ENCODE measurements at regions of chr1 and their contacts with region 1.

Region 1: GRCh38 chr1:12528021-12528852 is 89.8 kb downstream of the DHRS3 start:
- DNase-seq: peak; percentile 98
- ATAC-seq: peak; percentile 90
- H3K4me3 ChIP-seq: peak overlapping the region in 1 of 3 experiments; percentile 45; a peak in 2 of 6 replicates
- H3K27ac ChIP-seq: peak overlapping the region; percentile 76
- H3K4me1 ChIP-seq: peaks cover 95% of the 10 kb centered on the region
- H3K27me3 ChIP-seq: no peaks in the 10 kb centered on the region
- CTCF ChIP-seq: peak; percentile 47
- EP300 ChIP-seq: peak; percentile 96 to 98
- POLR2A ChIP-seq: peak in 1 of 2 experiments; percentile 41; a peak in 2 of 4 replicates
- RAD21 ChIP-seq: peak; percentile 40; the same call in 1 of the 2 replicates

Region 2: GRCh38 chr1:12314333-12314903 is 213.8 kb before region 1 on chr1:
- CTCF ChIA-PET with region 1: no interaction called
- POLR2A ChIA-PET with region 1: no interaction called
- in situ Hi-C with region 1: no loop called
- intact Hi-C with region 1: loop called (anchors 10 kb)
- DNase-seq: peak; percentile 12
- ATAC-seq: no peak
- H3K4me3 ChIP-seq: no peak overlapping the region
- H3K27ac ChIP-seq: no peak overlapping the region
- H3K4me1 ChIP-seq: peaks cover 5% of the 10 kb centered on the region
- H3K27me3 ChIP-seq: no peaks in the 10 kb centered on the region
- CTCF ChIP-seq: peak; percentile 58
- EP300 ChIP-seq: no peak
- POLR2A ChIP-seq: no peak
- RAD21 ChIP-seq: 0 out of 2 replicates have a peak, but pooled peaks have one; percentile 37

Region 3: DNA sequence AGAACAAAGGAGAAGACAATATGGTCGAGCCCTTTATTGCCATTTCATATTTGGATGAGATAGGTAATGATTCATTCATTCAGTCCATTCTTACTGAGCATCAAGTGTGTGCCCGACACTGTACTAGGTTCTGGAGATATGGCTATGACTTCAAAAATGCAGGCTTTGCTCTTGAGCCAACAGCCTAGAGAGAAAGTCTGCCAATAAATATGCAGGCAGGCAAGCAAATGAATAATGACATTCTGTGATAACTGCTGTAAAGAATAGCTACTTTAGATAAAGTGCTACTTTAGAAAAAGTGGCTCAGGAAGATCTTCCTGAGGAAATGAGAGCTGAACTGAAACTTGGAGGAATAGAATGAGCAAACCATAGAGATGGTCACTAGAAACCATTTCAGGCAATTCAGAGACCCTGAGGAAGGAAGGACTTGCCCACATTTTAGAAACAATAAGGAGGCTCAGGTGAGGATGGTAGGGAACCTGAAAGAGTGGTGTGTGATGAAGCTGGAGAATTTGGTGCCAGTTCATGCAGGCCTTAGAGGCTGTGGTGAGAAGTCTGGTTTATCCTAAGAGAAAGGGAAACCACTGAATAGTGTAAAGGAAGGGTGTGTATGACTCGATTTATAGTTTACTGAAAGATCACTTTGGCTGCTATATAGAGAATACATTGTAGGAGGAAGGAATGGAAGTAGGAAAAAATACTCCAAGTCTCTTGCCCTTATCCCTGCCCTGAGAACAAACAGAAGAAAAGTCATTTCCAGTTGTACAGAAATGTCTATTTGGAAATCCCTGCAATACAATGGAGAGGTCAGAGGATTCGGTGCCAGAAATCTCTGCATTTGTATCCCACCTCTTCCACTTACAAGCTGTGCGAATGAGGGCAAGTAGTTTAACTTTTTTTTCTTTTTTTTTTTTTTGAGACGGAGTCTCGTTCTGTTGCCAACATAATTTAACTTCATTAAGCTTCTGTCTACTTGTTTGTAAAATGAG is 130.5 kb before region 1 on chr1:
- CTCF ChIA-PET with region 1: no interaction called
- POLR2A ChIA-PET with region 1: interaction called, 33 read pairs
- in situ Hi-C with region 1: loop called (anchors 10 kb)
- intact Hi-C with region 1: no loop called
- DNase-seq: no peak
- ATAC-seq: no peak
- H3K4me3 ChIP-seq: no peak overlapping the region
- H3K27ac ChIP-seq: no peak overlapping the region
- H3K4me1 ChIP-seq: peaks cover 57% of the 10 kb centered on the region
- H3K27me3 ChIP-seq: no peaks in the 10 kb centered on the region
- CTCF ChIP-seq: no peak
- EP300 ChIP-seq: no peak
- POLR2A ChIP-seq: no peak
- RAD21 ChIP-seq: no peak

Region 4: DNA sequence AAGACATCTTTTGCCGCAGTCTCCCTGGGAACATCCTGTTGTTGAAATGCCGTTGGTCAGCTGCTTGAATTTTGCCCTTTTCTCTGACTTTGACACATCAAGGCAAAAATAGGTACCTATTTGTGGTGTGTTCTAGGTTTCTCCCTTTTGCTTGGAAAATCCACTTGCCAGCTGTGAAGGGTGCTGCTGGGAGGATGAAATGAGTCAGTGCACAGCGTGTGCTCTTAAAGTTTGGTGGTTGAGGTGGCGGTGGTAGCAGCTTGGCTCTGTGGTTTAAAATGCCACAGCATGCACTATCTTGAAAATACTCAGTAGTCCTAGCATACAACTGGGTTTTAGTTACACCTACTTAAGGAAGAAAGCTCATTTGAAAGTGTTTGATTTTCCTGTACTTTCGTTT is 94.1 kb before region 1 on chr1:
- CTCF ChIA-PET with region 1: no interaction called
- POLR2A ChIA-PET with region 1: interaction called, 3 read pairs
- in situ Hi-C with region 1: no loop called
- intact Hi-C with region 1: loop called (anchors 5 kb)
- DNase-seq: no peak
- ATAC-seq: no peak
- H3K4me3 ChIP-seq: no peak overlapping the region
- H3K27ac ChIP-seq: no peak overlapping the region
- H3K4me1 ChIP-seq: peaks cover 69% of the 10 kb centered on the region
- H3K27me3 ChIP-seq: no peaks in the 10 kb centered on the region
- CTCF ChIP-seq: no peak
- EP300 ChIP-seq: no peak
- POLR2A ChIP-seq: no peak
- RAD21 ChIP-seq: no peak

Region 5: DNA sequence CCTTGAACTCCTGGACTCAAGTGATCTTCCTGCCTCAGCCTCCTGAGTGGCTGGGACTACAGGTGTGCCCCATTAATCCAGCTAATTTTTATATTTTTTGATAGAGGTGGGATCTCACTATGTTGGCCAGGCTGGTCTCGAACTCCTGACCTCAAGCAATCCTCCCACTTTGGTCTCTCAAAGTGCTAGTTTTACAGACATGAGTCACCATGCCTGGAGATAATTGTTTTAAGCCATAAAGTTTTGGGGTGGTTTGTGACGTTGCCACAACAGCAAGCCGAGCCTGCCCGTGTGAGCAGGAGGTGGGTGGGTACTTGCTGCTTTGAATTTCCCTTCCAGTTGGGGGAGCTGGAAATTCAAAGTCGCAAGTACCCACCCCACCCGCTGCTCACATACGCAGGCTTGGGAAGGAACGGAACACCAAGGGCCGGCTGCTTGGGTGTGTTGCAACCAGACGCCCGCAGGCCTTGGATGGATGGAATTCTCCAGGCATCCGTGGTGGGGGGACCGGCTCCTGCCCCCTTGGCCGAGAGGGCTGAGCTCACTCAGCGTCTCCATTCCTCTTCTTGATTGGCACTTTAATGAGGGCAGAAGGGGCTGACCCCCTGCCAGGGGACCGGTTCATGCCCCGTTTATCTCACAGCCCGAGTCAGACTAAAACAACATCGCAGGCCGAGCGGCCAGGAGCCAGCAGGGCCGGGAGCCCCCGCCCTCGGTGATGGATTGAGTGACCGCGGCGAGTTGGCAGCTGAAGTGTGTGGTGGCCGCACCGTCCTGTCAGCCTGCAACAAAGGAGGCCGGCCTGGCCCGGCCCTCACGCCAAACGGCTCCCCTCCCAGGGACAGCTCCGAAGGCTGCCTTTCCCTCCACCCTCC is 11.7 kb after region 1 on chr1:
- CTCF ChIA-PET with region 1: no interaction called
- POLR2A ChIA-PET with region 1: interaction called, 50 read pairs
- in situ Hi-C with region 1: no loop called
- intact Hi-C with region 1: no loop called
- DNase-seq: peak; percentile 53
- ATAC-seq: peak; percentile 84
- H3K4me3 ChIP-seq: peak overlapping the region; percentile 42 to 69 (median 43)
- H3K27ac ChIP-seq: no peak overlapping the region
- H3K4me1 ChIP-seq: peaks cover 64% of the 10 kb centered on the region
- H3K27me3 ChIP-seq: peaks cover 0 to 17% of the 10 kb centered on the region in 2 experiments; a peak in 2 of 5 replicates
- CTCF ChIP-seq: peak; percentile 42
- EP300 ChIP-seq: no peak
- POLR2A ChIP-seq: no peak
- RAD21 ChIP-seq: no peak

Region 6: GRCh38 chr1:12722626-12723025 is 194.4 kb after region 1 on chr1:
- CTCF ChIA-PET with region 1: no interaction called
- POLR2A ChIA-PET with region 1: no interaction called
- in situ Hi-C with region 1: no loop called
- intact Hi-C with region 1: no loop called
- DNase-seq: no peak
- ATAC-seq: no peak
- H3K4me3 ChIP-seq: no peak overlapping the region
- H3K27ac ChIP-seq: no peak overlapping the region
- H3K4me1 ChIP-seq: no peaks in the 10 kb centered on the region
- H3K27me3 ChIP-seq: peaks cover 0 to 17% of the 10 kb centered on the region in 2 experiments; a peak in 2 of 5 replicates
- CTCF ChIP-seq: no peak
- EP300 ChIP-seq: no peak
- POLR2A ChIP-seq: no peak
- RAD21 ChIP-seq: no peak